Head of caudate nucleus (tissue), 42 donors: ENCODE measurements at regions of chr13 and their contacts with region 1.

Region 1: GRCh38 chr13:29849731-29850223 is 640 bp downstream of the UBL3 start:
- DNase-seq: peak; percentile 19 to 83 (median 60)

Region 2: DNA sequence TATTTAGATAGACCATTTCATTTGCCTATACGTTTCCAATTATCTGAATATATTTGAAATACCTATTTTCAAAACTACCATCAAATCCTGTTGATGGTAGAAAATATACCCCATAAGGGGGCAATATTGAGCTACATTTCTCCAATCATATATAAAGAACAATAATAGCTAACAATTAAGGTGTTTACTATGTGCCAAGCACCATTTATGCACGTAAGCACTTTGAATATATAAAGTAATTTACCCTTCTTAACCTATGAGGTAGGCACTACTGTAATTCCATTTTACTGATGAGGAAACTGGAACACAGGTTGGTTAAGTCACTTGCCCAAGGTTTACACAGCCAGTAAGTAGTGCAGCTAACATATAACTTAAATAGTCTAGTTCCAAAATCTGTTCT is 78.5 kb before region 1 on chr13:
- intact Hi-C with region 1: loop called (anchors 10 kb)
- DNase-seq: no peak